Activated T-helper 1 cell treated with anti-CD3 and anti-CD28 coated beads, Interleukin-12 subunit alpha, Interleukin-12 subunit beta, Interleukin-2, Interleukin-4 antibody, amounts not matched to agents 30 ng/mL and 10 ng/mL and 1 ng/mL, durations not matched to agents 14 hours and 24 hours and 36 hours (primary cell): ENCODE measurements at regions of chr1 and their contacts with region 1.

Region 1: DNA sequence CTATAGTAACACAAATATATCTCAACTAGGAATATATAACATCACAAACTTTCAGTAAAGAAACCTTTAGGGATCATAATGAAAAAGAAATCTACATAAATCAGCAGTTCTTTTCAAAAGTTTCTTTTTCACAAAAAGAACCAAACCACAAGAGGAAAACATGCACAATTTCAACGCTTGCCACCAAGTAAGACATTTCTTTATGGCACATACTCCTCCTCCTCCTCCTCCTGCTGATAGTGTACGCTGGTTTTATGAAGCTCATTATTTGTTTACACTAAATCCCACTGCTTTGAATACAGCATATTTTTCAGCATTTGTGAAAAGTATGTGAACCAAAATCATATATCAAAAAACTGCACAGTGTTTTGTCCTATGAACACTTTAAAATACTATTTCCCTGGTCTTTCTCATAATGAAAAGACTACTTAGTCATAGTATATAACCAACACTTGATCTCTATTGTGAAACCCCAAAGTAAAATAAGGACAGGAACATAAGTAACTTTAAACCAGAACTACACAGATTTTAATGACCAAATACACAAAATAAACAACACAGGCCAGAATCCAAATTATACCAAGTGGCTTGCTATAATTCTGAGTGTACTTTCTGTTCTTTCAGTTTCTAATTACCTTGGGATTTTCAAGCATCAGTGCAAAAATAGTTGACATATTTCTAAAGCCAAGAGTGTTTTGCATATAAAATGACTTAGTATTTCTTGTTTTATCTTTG is 184.2 kb downstream of the EIF4G3 start:
- DNase-seq: no peak
- H3K4me3 Mint-ChIP-seq: peak overlapping the region; percentile 61
- H3K27ac Mint-ChIP-seq: peak overlapping the region; percentile 89
- H3K4me1 Mint-ChIP-seq: peaks cover 52% of the 10 kb centered on the region
- H3K27me3 Mint-ChIP-seq: no peaks in the 10 kb centered on the region

Region 2: GRCh38 chr1:20640183-20640597 is 352.3 kb before region 1 on chr1:
- intact Hi-C with region 1: no loop called
- DNase-seq: peak; percentile 45
- H3K4me3 Mint-ChIP-seq: no peak overlapping the region
- H3K27ac Mint-ChIP-seq: no peak overlapping the region
- H3K4me1 Mint-ChIP-seq: no peaks in the 10 kb centered on the region
- H3K27me3 Mint-ChIP-seq: no peaks in the 10 kb centered on the region

Region 3: DNA sequence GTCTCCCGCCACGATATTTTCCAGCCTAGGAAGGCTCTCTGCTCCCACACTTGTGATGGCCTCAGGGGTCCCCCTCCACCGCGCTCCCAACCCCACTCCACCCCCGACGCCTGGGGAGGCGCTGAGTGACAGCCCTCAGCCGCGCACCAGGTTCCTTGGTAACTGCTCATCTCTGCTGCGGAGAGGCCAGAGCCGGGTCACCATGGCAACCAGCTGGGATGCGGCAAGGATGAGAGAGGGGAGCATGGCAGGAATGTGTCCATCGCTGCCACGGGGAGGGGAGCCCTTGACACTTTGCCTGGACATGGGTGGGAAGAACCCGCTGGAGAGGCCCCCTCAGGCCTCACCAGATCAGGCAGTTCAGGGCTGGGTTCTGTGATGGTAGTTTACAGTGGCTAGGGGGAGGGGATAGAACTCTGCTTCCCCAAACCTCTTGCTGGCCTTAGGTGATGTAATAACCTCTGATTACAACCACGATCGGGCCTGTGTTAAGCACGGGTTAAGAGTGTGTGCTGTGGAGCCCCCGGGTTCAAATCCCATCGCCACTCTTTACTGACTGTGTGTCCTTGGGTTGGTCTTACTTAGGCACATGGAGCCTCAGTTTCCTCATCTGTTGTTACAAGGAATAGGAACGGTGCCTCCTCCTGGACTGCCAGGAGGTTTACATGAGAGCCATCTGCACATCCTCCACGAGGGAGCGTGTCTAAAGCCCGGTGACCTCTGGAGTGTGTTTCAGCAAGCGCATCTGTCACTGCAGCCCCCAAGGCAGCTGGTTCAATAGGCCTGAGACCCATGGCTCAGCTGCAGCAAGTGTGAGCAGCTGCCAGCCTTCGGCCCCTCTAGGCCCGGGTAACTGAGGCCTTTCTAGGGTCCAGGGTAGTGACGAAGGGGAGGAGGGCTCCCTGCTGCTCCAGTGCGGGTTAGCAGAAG is 280.9 kb before region 1 on chr1:
- intact Hi-C with region 1: no loop called
- DNase-seq: no peak
- H3K4me3 Mint-ChIP-seq: no peak overlapping the region
- H3K27ac Mint-ChIP-seq: no peak overlapping the region
- H3K4me1 Mint-ChIP-seq: peaks cover 5% of the 10 kb centered on the region
- H3K27me3 Mint-ChIP-seq: peaks cover 15% of the 10 kb centered on the region

Region 4: GRCh38 chr1:20974069-20974468 is 18.4 kb before region 1 on chr1:
- intact Hi-C with region 1: loop called (anchors 2 kb)
- DNase-seq: no peak
- H3K4me3 Mint-ChIP-seq: no peak overlapping the region
- H3K27ac Mint-ChIP-seq: no peak overlapping the region
- H3K4me1 Mint-ChIP-seq: no peaks in the 10 kb centered on the region
- H3K27me3 Mint-ChIP-seq: no peaks in the 10 kb centered on the region

Region 5: GRCh38 chr1:21022279-21023040 is 30.0 kb after region 1 on chr1:
- intact Hi-C with region 1: loop called (anchors 2 kb)
- DNase-seq: peak; percentile 30
- H3K4me3 Mint-ChIP-seq: peak overlapping the region; percentile 63
- H3K27ac Mint-ChIP-seq: peak overlapping the region; percentile 86
- H3K4me1 Mint-ChIP-seq: peaks cover 26% of the 10 kb centered on the region
- H3K27me3 Mint-ChIP-seq: no peaks in the 10 kb centered on the region

Region 6: DNA sequence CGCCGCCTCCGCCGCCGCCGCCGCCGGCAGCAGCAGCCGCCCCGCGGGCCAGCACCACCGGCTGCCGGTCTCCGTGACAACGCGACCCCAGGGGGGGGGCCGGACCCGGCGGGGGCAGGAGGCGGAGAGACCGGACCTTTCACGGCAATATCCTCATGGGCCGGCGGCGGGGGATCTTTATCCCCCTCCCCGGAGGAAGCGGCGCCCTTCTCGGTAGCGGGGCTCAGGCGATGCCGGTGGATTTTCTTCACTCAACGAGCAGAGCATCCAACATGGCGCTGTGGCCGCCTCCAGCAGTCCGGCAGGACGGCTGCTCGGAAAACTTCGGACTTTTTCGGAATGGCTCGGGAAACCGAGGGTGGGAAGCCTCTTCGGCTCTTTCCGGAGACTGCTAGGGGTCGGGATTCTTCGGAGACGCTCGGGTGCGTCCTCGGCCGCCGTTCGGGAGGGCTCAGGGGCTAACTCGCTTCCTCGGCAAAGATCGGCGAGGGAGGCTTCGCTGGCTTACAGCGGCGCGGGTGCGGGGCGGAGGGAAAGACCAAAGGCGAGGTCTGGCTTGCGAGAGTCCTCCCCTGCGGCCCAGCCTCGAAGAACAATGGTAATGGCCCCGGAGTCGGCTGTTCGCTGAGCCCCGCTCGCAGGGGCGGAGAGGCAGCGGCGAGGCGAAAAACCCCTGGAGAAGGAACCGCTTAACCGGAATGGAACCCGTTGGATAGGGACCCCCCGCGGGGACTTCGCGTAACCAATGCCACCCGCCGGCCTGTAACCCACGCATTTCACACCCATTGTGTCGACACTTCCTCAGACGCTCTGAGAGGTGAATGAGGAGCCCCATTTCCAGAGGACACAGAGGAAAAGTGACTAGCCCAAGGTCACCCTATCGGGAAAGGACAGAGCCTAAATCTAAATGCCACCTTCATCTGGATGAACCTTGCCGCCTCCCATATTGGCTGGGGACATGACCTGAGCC is 184.4 kb after region 1 on chr1 and contains the start of gene EIF4G3:
- intact Hi-C with region 1: loop called (anchors 2 kb)
- DNase-seq: peak; percentile 99
- H3K4me3 Mint-ChIP-seq: peak within 1 kb of the TSS; percentile 89
- H3K27ac Mint-ChIP-seq: peak within 1 kb of the TSS; percentile 94
- H3K4me1 Mint-ChIP-seq: peaks cover 25% of the 10 kb centered on the region
- H3K27me3 Mint-ChIP-seq: no peaks in the 10 kb centered on the region
- total RNA-seq, gene EIF4G3: 67.5 and 69.3 TPM in 2 replicates